ENCODE measurements at regions of chr3 and their contacts with region 1.

Region 1: GRCh38 chr3:120558771-120559241 is 37.3 kb upstream of the NDUFB4 start:
- DNase-seq: peak; percentile 78
- H3K4me3 ChIP-seq: peak overlapping the region; percentile 59 to 61
- H3K27ac ChIP-seq: peak overlapping the region; percentile 81 to 94
- H3K4me1 ChIP-seq: peaks cover 20 to 21% of the 10 kb centered on the region in 2 experiments
- H3K27me3 ChIP-seq: no peaks in the 10 kb centered on the region
- CTCF ChIP-seq: peak; percentile 97
- EP300 ChIP-seq: no peak
- RAD21 ChIP-seq: peak; percentile 91

Region 2: GRCh38 chr3:119891944-119892721 is 666.7 kb before region 1 on chr3:
- CTCF ChIA-PET with region 1: interaction called, 21 read pairs
- POLR2A ChIA-PET with region 1: no interaction called
- DNase-seq: peak; percentile 23
- H3K4me3 ChIP-seq: no peak overlapping the region; a peak in 1 of 4 replicates
- H3K27ac ChIP-seq: no peak overlapping the region
- H3K4me1 ChIP-seq: no peaks in the 10 kb centered on the region; a peak in 1 of 4 replicates
- H3K27me3 ChIP-seq: no peaks in the 10 kb centered on the region
- CTCF ChIP-seq: peak; percentile 80
- EP300 ChIP-seq: no peak
- RAD21 ChIP-seq: peak; percentile 97

Region 3: DNA sequence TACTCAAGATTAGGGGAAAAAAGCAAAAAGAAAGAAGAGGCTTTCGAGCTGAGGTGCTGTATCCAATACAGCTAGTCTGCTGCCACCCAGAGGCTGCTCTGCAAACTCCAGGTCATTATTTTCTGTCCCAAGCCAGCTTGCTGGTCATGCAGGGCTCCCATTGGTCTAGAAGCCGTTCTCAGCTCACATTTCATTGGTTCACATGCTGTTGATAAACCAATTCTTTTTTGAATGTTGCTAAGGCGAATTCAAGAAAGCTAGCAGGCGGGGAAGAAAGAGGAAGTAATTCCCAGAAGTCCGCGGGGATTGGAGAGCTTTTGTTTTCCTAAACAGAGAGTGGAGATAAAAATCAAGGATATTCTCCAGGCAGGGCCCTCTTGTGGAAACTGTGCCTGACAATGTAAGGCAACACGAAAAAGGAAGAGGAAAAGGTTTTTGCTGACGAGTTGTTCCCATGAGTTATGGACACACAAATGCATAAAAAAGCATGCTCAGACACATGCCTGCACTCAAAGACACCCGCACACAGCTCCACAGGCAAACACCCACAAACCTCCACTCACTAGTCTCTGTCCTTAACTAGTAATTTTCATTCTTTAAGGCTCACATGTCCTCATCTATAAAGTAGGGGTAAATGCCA is 141.4 kb before region 1 on chr3:
- CTCF ChIA-PET with region 1: interaction called, 269 read pairs
- POLR2A ChIA-PET with region 1: interaction called, 18 read pairs
- DNase-seq: peak; percentile 89
- H3K4me3 ChIP-seq: peak overlapping the region; percentile 34 to 46; a peak in 3 of 4 replicates
- H3K27ac ChIP-seq: peak overlapping the region; percentile 96 to 98
- H3K4me1 ChIP-seq: peaks cover 23 to 27% of the 10 kb centered on the region in 2 experiments
- H3K27me3 ChIP-seq: no peaks in the 10 kb centered on the region
- CTCF ChIP-seq: peak; percentile 93
- EP300 ChIP-seq: peak in 1 of 2 experiments; percentile 80; a peak in 2 of 4 replicates
- RAD21 ChIP-seq: peak; percentile 92

Region 4: GRCh38 chr3:120487191-120487650 is 71.6 kb before region 1 on chr3:
- CTCF ChIA-PET with region 1: interaction called, 14 read pairs
- POLR2A ChIA-PET with region 1: no interaction called
- DNase-seq: no peak
- H3K4me3 ChIP-seq: no peak overlapping the region
- H3K27ac ChIP-seq: peak overlapping the region; percentile 25 to 60; a peak in 3 of 4 replicates
- H3K4me1 ChIP-seq: peaks cover 0 to 3% of the 10 kb centered on the region in 2 experiments; a peak in 2 of 4 replicates
- H3K27me3 ChIP-seq: no peaks in the 10 kb centered on the region
- CTCF ChIP-seq: no peak
- EP300 ChIP-seq: peak; percentile 8 to 47; a peak in 1 of 4 replicates
- RAD21 ChIP-seq: no peak

Region 5: GRCh38 chr3:120524171-120524923 is 34.5 kb before region 1 on chr3:
- CTCF ChIA-PET with region 1: interaction called, 15 read pairs
- POLR2A ChIA-PET with region 1: no interaction called
- DNase-seq: no peak
- H3K4me3 ChIP-seq: no peak overlapping the region
- H3K27ac ChIP-seq: no peak overlapping the region
- H3K4me1 ChIP-seq: peaks cover 0 to 2% of the 10 kb centered on the region in 2 experiments; a peak in 2 of 4 replicates
- H3K27me3 ChIP-seq: no peaks in the 10 kb centered on the region
- CTCF ChIP-seq: no peak
- EP300 ChIP-seq: 0 out of 4 replicates have a peak, but pooled peaks of 1 of the 2 experiments have one; percentile 23
- RAD21 ChIP-seq: no peak

Region 6: DNA sequence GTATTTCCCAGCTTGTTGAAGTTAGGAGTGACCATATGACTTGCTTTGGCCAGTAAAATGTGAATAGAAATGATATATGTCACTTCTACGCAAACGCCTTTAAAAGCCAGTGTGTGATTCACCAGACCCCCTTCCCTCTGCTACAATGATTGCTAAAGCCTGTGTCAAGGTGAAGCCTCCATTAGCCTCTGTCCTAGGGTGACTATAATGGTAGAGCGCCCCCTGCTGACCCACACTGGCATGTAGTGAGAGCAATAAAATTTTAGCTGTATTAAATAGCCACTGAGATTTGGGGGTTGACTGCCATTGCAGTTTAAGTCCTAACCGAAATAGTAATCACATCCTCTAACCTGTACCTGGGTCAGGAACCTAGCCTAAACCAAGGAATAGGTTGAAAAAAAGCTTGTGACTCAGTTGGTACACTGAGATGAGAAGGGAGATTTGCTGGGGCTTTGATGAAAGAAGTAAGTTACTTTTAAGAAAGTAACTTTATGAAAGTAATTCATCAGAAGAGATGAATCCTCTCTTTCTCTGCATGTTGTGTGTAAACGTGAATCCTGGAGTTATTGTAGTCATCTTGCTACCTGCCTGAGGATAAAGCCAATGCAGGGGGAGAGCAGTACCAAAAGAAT is 236.3 kb after region 1 on chr3:
- CTCF ChIA-PET with region 1: interaction called, 277 read pairs
- POLR2A ChIA-PET with region 1: interaction called, 3 read pairs
- DNase-seq: peak; percentile 51
- H3K4me3 ChIP-seq: no peak overlapping the region; a peak in 1 of 4 replicates
- H3K27ac ChIP-seq: no peak overlapping the region
- H3K4me1 ChIP-seq: peaks cover 0 to 17% of the 10 kb centered on the region in 2 experiments; a peak in 2 of 4 replicates
- H3K27me3 ChIP-seq: no peaks in the 10 kb centered on the region
- CTCF ChIP-seq: peak; percentile 94
- EP300 ChIP-seq: no peak
- RAD21 ChIP-seq: peak; percentile 94

Measured in SK-N-SH (cell line).